ENCODE measurements at regions of chr9 and their contacts with region 1.

Region 1: DNA sequence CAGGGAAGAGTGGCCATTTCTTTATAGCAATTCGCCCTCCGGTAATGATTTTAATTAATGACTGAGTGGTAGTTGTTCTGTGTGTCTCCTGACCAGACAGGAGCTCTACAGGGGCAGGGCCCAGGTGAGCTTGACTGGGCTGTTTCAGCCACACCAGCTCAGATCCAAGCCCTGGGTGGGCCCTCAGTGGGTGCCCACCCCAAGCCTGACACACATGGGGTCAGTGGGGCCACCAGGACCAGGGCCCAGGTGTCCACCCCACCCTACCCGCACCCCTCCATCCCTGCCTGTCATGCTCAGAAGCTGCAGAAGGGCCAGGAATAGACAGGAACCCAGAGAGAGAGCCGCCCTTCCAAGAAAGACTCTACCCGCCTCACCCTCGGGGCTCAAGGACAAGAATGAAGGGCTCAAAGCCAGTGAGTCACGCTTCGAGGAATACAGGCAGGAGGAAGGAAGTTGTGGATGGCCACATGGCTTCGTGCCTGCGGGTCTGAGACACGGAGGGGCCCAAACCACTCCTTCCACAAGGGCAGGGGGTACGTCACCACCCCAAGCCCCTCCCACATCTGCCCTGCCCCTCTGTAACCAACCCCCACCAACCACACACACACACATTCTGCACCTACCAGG is 56.2 kb upstream of the STXBP1 start:
- DNase-seq: peak; percentile 65
- H3K4me3 Mint-ChIP-seq: peak overlapping the region; percentile 41
- H3K27ac Mint-ChIP-seq: peak overlapping the region; percentile 85
- H3K4me1 Mint-ChIP-seq: peaks cover 57% of the 10 kb centered on the region
- H3K27me3 Mint-ChIP-seq: no peaks in the 10 kb centered on the region

Region 2: GRCh38 chr9:127568971-127569885 is 13.3 kb after region 1 on chr9:
- intact Hi-C with region 1: loop called (anchors 1 kb)
- DNase-seq: peak; percentile 78
- H3K4me3 Mint-ChIP-seq: peak overlapping the region; percentile 85
- H3K27ac Mint-ChIP-seq: peak overlapping the region; percentile 87
- H3K4me1 Mint-ChIP-seq: peaks cover 49% of the 10 kb centered on the region
- H3K27me3 Mint-ChIP-seq: no peaks in the 10 kb centered on the region